ENCODE measurements at regions of chr15 and their contacts with region 1.

Region 1: DNA sequence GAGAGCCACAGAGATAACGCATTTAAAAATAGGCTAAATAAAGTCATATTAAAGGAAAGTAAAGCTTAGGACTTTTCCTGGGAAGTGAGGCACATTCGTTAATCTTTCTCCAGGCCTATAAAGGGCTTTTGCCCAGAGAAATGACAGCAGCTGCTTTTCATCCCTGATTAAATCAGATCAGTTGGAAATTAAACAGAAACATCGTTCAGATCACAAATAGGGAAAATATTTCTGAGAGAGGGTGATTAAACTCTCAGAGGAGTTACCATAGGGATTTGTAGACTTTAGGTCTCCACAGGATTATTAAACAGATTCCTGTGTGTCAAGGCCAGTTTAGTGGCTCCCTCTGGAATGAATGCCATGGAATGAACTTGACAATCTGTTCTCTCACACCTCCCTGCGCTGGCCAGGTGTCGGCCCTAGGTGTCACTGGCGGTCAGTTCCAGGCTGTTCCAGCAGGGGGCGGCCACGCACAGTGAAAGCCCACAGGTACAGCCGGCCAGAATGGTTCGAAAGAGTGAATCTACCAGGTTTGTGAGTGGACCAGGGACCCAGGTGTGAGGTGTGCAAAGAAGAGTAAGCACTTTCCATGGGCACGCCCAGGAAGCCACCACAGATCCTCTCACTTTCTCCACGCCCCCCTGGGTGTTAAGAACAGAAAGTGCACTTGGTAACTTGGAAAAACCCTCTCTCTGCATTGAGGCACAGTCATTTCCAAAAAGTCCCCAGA is 253.0 kb upstream of the RASGRP1 start:
- DNase-seq: peak; percentile 36 to 86
- H3K4me3 ChIP-seq: no peak overlapping the region
- H3K27ac ChIP-seq: no peak overlapping the region
- H3K4me1 ChIP-seq: no peaks in the 10 kb centered on the region
- H3K27me3 ChIP-seq: no peaks in the 10 kb centered on the region
- CTCF ChIP-seq: peak; percentile 94 to 96 (median 94)

Region 2: GRCh38 chr15:38699633-38700230 is 117.9 kb before region 1 on chr15:
- intact Hi-C with region 1: no loop called
- DNase-seq: peak in 1 of 2 donors; percentile 69
- H3K4me3 ChIP-seq: no peak overlapping the region
- H3K27ac ChIP-seq: no peak overlapping the region
- H3K4me1 ChIP-seq: no peaks in the 10 kb centered on the region
- H3K27me3 ChIP-seq: no peaks in the 10 kb centered on the region
- CTCF ChIP-seq: peak; percentile 45 to 84 (median 75)

Region 3: GRCh38 chr15:38991126-38991525 is 173.5 kb after region 1 on chr15:
- intact Hi-C with region 1: loop called (anchors 5 kb)
- DNase-seq: no peak
- H3K4me3 ChIP-seq: no peak overlapping the region
- H3K27ac ChIP-seq: no peak overlapping the region
- H3K4me1 ChIP-seq: no peaks in the 10 kb centered on the region
- H3K27me3 ChIP-seq: no peaks in the 10 kb centered on the region
- CTCF ChIP-seq: peak in 2 of 3 experiments; percentile 21 to 36